Activated CD4-positive, alpha-beta memory T cell treated with anti-CD3 and anti-CD28 coated beads for 36 hours (primary cell): ENCODE measurements at regions of chr1 and their contacts with region 1.

Region 1: GRCh38 chr1:91021686-91022517 is at the start of gene ZNF644:
- DNase-seq: peak; percentile 96
- H3K4me3 Mint-ChIP-seq: peak within 1 kb of the TSS; percentile 98
- H3K27ac Mint-ChIP-seq: peak within 1 kb of the TSS; percentile 99
- H3K4me1 Mint-ChIP-seq: peaks cover 63% of the 10 kb centered on the region
- H3K27me3 Mint-ChIP-seq: no peaks in the 10 kb centered on the region
- total RNA-seq, gene ZNF644: 37.5 to 42.5 TPM

Region 2: GRCh38 chr1:90729504-90730242 is 292.2 kb before region 1 on chr1:
- CTCF ChIA-PET with region 1: no interaction called
- POLR2A ChIA-PET with region 1: no interaction called
- intact Hi-C with region 1: loop called (anchors 5 kb)
- DNase-seq: peak; percentile 41
- H3K4me3 Mint-ChIP-seq: peak overlapping the region; percentile 33
- H3K27ac Mint-ChIP-seq: no peak overlapping the region
- H3K4me1 Mint-ChIP-seq: peaks cover 40% of the 10 kb centered on the region
- H3K27me3 Mint-ChIP-seq: peaks cover 78% of the 10 kb centered on the region

Region 3: DNA sequence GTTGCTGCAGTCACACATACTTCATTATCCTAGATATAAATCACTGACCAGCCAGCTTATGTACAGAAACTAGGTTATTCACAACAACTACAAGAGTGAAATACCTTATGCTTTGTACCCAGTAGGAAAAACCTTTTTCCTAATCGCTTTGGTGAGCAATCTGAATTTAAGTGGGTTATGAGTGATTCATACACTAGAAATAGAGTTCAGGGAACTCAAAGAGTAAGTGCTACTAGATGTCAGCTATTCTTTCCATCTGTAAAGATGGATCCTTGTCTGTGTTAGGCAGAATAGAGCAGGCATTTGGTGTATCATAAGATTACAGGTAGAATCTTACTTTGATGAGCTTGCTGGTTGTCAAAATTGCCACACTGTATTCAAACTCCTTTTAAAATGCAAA is 102.0 kb before region 1 on chr1:
- CTCF ChIA-PET with region 1: no interaction called
- POLR2A ChIA-PET with region 1: interaction called, 3 read pairs
- intact Hi-C with region 1: loop called (anchors 5 kb)
- DNase-seq: no peak
- H3K4me3 Mint-ChIP-seq: no peak overlapping the region
- H3K27ac Mint-ChIP-seq: peak overlapping the region; percentile 13
- H3K4me1 Mint-ChIP-seq: peaks cover 53% of the 10 kb centered on the region
- H3K27me3 Mint-ChIP-seq: no peaks in the 10 kb centered on the region

Region 4: DNA sequence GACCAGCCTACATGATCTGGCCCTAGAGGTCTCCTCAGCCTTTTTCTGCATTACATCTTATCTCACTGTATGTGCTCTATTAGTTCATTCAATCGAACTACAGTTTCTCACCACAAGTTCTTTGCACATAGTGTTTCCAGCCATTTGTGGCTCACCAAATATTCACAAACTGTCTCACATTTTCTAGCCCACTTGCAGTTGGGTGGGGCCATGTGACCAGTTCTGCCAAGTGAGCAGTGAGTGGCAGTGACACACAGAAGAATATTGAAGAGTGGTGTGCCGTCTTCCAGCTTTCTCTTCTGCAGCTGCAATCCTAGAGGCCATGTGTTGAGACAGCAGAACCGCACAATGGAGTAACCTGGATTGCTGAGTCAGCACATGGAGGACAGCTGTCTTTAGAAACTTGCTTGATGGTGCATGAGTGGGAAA is 103.1 kb after region 1 on chr1:
- CTCF ChIA-PET with region 1: interaction called, 3 read pairs
- POLR2A ChIA-PET with region 1: interaction called, 16 read pairs
- intact Hi-C with region 1: loop called (anchors 1 kb)
- DNase-seq: peak; percentile 67
- H3K4me3 Mint-ChIP-seq: peak overlapping the region; percentile 24
- H3K27ac Mint-ChIP-seq: peak overlapping the region; percentile 73
- H3K4me1 Mint-ChIP-seq: peaks cover 19% of the 10 kb centered on the region
- H3K27me3 Mint-ChIP-seq: peaks cover 3% of the 10 kb centered on the region

Region 5: GRCh38 chr1:92485381-92486257 is 1463.7 kb after region 1 on chr1:
- CTCF ChIA-PET with region 1: no interaction called
- POLR2A ChIA-PET with region 1: no interaction called
- intact Hi-C with region 1: loop called (anchors 5 kb)
- DNase-seq: peak; percentile 93
- H3K4me3 Mint-ChIP-seq: peak overlapping the region; percentile 90
- H3K27ac Mint-ChIP-seq: peak overlapping the region; percentile 98
- H3K4me1 Mint-ChIP-seq: peaks cover 33% of the 10 kb centered on the region
- H3K27me3 Mint-ChIP-seq: no peaks in the 10 kb centered on the region